ENCODE measurements at regions of chr2 and their contacts with region 1.

Region 1: GRCh38 chr2:95284886-95285541 is 10.8 kb downstream of the PROM2 start:
- DNase-seq: no peak
- H3K4me3 Mint-ChIP-seq: no peak overlapping the region
- H3K27ac Mint-ChIP-seq: no peak overlapping the region
- H3K4me1 Mint-ChIP-seq: no peaks in the 10 kb centered on the region
- H3K27me3 Mint-ChIP-seq: no peaks in the 10 kb centered on the region
- CTCF ChIP-seq: no peak

Region 2: GRCh38 chr2:95296880-95297487 is 12.0 kb after region 1 on chr2 and contains the start of gene KCNIP3:
- CTCF ChIA-PET with region 1: interaction called, 10 read pairs
- POLR2A ChIA-PET with region 1: no interaction called
- intact Hi-C with region 1: no loop called
- DNase-seq: no peak
- H3K4me3 Mint-ChIP-seq: no peak within 1 kb of the TSS
- H3K27ac Mint-ChIP-seq: no peak within 1 kb of the TSS
- H3K4me1 Mint-ChIP-seq: peaks cover 15% of the 10 kb centered on the region
- H3K27me3 Mint-ChIP-seq: peaks cover 12% of the 10 kb centered on the region
- CTCF ChIP-seq: no peak
- total RNA-seq, gene KCNIP3: 9.5 and 15.6 TPM in 2 replicates

Measured in MCF 10A (cell line).